ENCODE measurements at regions of chr10 and their contacts with region 1.

Region 1: GRCh38 chr10:133257489-133258065 is 19.1 kb downstream of the ADAM8 start:
- DNase-seq: peak in 1 of 2 experiments; percentile 79
- H3K4me3 ChIP-seq: peak overlapping the region; percentile 0 to 57 (median 32); a peak in 7 of 8 replicates
- H3K27ac ChIP-seq: no peak overlapping the region
- H3K4me1 ChIP-seq: peaks cover 0 to 19% (median 11%) of the 10 kb centered on the region in 4 experiments; a peak in 5 of 7 replicates
- H3K27me3 ChIP-seq: peaks cover 0 to 5% (median 4%) of the 10 kb centered on the region in 4 experiments; a peak in 6 of 7 replicates
- CTCF ChIP-seq: peak in 2 of 3 experiments; percentile 10 to 21; a peak in 2 of 4 replicates
- EP300 ChIP-seq: no peak
- POLR2A ChIP-seq: no peak
- RAD21 ChIP-seq: peak; percentile 11 to 24

Region 2: DNA sequence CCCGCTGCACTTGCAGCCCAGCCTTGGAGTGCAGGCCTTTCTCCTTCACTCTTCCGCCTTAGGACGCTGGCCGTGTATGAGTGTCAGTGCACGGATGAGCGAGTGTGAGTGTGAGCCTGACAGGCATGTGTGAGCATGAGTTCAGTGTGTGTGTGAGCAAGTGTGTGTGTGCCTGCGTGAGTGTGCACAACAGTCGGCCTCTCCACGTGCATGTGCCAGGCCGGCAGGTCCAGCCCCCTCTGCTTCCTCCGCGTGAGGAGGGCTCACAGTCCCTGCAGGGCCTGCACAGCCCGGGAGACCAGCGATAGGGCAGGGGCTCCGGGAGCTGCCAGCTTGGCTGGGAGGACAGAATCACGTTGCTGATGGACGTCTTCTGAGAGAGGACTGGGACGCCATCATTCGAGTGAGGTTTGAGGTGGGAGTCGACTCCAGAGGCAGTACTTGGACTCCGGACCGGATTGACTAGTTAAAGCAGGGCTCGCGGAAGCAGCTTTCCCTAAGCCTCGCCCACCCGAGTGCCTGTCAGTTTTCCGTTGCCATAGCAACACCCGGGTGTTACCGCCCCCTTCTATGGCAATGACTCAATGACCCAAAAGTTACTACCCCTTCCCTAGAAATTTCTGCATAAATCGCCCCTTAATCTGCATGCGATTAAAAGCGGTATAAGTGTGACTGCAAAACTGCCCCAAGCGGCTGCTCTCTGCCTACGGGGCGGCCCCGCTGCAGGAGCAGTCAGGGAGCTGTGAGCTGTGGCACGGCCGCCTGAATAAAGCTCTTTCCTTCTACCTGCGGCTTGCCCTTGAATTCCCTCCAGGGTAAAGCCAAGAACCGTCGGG is 295.6 kb before region 1 on chr10:
- CTCF ChIA-PET with region 1: no interaction called
- POLR2A ChIA-PET with region 1: no interaction called
- DNase-seq: peak; percentile 70 to 91
- H3K4me3 ChIP-seq: peak overlapping the region; percentile 22 to 57 (median 37); a peak in 7 of 8 replicates
- H3K27ac ChIP-seq: no peak overlapping the region
- H3K4me1 ChIP-seq: peaks cover 3 to 8% (median 5%) of the 10 kb centered on the region in 4 experiments; a peak in 6 of 7 replicates
- H3K27me3 ChIP-seq: no peaks in the 10 kb centered on the region; a peak in 1 of 7 replicates
- CTCF ChIP-seq: peak in 1 of 3 experiments; percentile 4; a peak in 1 of 4 replicates
- EP300 ChIP-seq: no peak
- POLR2A ChIP-seq: peak in 1 of 2 experiments; percentile 37; a peak in 1 of 3 replicates
- RAD21 ChIP-seq: no peak

Region 3: GRCh38 chr10:133230387-133231195 is 27.0 kb before region 1 on chr10:
- CTCF ChIA-PET with region 1: interaction called, 8 read pairs
- POLR2A ChIA-PET with region 1: interaction called, 11 read pairs
- DNase-seq: no peak
- H3K4me3 ChIP-seq: peak overlapping the region; percentile 20 to 63 (median 38); a peak in 6 of 8 replicates
- H3K27ac ChIP-seq: no peak overlapping the region
- H3K4me1 ChIP-seq: peaks cover 0 to 28% (median 12%) of the 10 kb centered on the region in 4 experiments; a peak in 6 of 7 replicates
- H3K27me3 ChIP-seq: peaks cover 22 to 39% (median 36%) of the 10 kb centered on the region in 4 experiments
- CTCF ChIP-seq: no peak
- EP300 ChIP-seq: no peak
- POLR2A ChIP-seq: no peak
- RAD21 ChIP-seq: no peak

Region 4: GRCh38 chr10:133245439-133246235 is 11.9 kb before region 1 on chr10:
- CTCF ChIA-PET with region 1: interaction called, 24 read pairs
- POLR2A ChIA-PET with region 1: interaction called, 6 read pairs
- DNase-seq: no peak
- H3K4me3 ChIP-seq: no peak overlapping the region
- H3K27ac ChIP-seq: no peak overlapping the region
- H3K4me1 ChIP-seq: peaks cover 0 to 15% (median 8%) of the 10 kb centered on the region in 4 experiments; a peak in 5 of 7 replicates
- H3K27me3 ChIP-seq: no peaks in the 10 kb centered on the region; a peak in 3 of 7 replicates
- CTCF ChIP-seq: no peak
- EP300 ChIP-seq: no peak
- POLR2A ChIP-seq: no peak
- RAD21 ChIP-seq: no peak

Region 5: GRCh38 chr10:133267829-133268228 is 10.3 kb after region 1 on chr10:
- CTCF ChIA-PET with region 1: interaction called, 11 read pairs
- POLR2A ChIA-PET with region 1: interaction called, 3 read pairs
- DNase-seq: no peak
- H3K4me3 ChIP-seq: no peak overlapping the region
- H3K27ac ChIP-seq: no peak overlapping the region
- H3K4me1 ChIP-seq: peaks cover 0 to 3% (median 0%) of the 10 kb centered on the region in 4 experiments; a peak in 4 of 7 replicates
- H3K27me3 ChIP-seq: peaks cover 0 to 7% (median 3%) of the 10 kb centered on the region in 4 experiments; a peak in 5 of 7 replicates
- CTCF ChIP-seq: peak in 2 of 3 experiments; percentile 11 to 29; a peak in 3 of 4 replicates
- EP300 ChIP-seq: no peak
- POLR2A ChIP-seq: no peak
- RAD21 ChIP-seq: peak; percentile 35 to 60; a peak in 3 of 4 replicates

Region 6: DNA sequence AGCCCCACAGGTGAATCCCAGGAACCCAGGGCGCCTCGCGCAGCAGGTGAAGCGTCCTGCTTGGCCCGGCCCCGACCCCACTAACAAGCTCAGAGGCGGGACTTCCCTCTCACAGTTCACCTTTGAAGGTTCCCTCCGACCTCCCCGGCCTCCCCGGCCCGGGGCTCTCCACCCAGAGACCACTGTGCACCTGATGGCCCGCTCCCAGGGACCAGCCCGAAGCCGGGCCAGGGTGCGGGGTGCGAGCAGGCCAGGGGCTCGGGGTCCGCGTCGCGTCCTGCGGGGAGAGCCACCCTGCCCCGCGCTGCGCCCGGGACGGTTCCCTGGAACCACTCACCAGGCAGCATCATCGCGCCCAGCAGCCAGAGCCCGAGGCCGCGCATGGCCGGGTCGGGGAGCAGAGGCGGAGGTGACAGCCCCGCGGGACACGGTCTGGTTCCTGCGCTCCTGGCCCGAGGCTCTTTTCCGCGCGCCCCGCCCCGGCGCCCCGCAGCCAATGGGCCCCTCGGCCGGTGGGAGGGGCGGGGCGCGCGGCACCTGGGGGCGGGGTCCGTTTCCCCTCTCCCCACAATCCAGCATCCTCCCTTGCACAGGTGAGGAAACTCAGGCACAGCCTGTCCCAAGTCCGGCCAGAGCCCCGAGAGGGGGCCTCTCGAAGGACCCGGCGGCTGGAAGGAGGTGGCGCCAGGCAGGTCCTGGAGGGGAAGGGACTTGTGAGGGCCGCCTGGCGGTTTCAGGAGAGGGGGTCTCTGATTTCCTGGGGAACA is 19.0 kb after region 1 on chr10 and contains the start of gene ADAM8:
- CTCF ChIA-PET with region 1: interaction called, 11 read pairs
- POLR2A ChIA-PET with region 1: interaction called, 7 read pairs
- DNase-seq: peak; percentile 25 to 92
- H3K4me3 ChIP-seq: peak within 1 kb of the TSS; percentile 26 to 60 (median 46)
- H3K27ac ChIP-seq: no peak within 1 kb of the TSS
- H3K4me1 ChIP-seq: peaks cover 0 to 13% (median 7%) of the 10 kb centered on the region in 4 experiments; a peak in 5 of 7 replicates
- H3K27me3 ChIP-seq: peaks cover 0 to 7% (median 4%) of the 10 kb centered on the region in 4 experiments; a peak in 6 of 7 replicates
- CTCF ChIP-seq: peak in 1 of 3 experiments; percentile 1; a peak in 1 of 4 replicates
- EP300 ChIP-seq: no peak
- POLR2A ChIP-seq: no peak
- RAD21 ChIP-seq: no peak; a peak in 1 of 4 replicates
- total RNA-seq, gene ADAM8: 4.4 and 4.6 TPM in 2 replicates

Measured in H1 (cell line).